ENCODE measurements at regions of chr4 and their contacts with region 1.

Region 1: DNA sequence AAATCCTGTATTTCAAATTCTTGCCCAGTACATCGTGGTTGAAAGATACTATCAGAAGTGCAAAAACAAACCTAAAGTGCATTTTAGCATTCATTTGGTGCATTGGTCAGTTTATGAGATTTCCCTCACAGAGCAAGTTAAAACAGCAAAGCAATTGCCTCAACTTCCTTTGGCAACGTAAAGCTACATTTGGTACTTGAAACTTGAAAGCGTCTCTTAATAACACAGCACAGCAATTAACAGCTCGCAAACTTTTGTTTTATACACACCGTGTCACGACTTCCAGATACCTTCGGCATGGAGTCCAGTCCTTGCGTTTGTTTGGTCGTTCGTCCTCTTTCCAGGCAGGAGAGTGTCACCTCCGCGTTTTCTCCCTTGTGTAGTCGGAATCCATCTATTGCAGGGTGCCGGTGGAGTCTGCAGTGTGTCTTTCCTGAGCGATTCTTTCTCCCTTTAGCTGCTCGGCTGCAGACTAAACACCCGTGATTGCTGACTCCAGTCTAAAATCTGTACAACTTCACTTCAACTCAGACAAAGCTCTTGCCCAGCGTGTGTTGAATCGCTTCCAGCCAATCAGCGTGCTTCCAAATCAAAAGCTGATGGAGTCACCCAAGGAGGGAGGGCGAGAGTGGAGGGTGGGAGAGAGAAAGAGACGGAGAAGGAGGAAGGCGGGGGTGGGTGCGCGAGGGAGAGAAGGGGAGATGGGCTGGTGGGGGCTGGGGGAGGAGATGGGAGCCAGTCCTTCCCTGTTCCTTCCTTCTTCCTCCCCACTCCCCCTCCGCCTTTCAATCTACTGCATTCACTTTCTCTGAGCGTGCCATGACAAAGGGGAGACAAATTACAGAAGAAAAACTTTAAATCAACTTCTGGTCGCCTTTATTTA is at the start of gene PCDH18:
- DNase-seq: peak; percentile 98
- ATAC-seq: peak; percentile 83
- H3K4me3 ChIP-seq: peak within 1 kb of the TSS; percentile 62
- H3K27ac ChIP-seq: peak within 1 kb of the TSS; percentile 87
- H3K4me1 ChIP-seq: no peaks in the 10 kb centered on the region; the same call in 1 of the 2 replicates
- H3K27me3 ChIP-seq: no peaks in the 10 kb centered on the region
- CTCF ChIP-seq: no peak
- POLR2A ChIP-seq: peak; percentile 79
- RAD21 ChIP-seq: no peak; the same call in 1 of the 2 replicates
- total RNA-seq, gene PCDH18: 108 and 119 TPM in 2 replicates

Region 2: GRCh38 chr4:137226898-137227297 is 305.3 kb before region 1 on chr4:
- CTCF ChIA-PET with region 1: no interaction called
- POLR2A ChIA-PET with region 1: no interaction called
- dilution Hi-C with region 1: no loop called
- in situ Hi-C with region 1: no loop called
- intact Hi-C with region 1: loop called (anchors 5 kb)
- DNase-seq: peak; percentile 16
- ATAC-seq: peak; percentile 44; the same call in 1 of the 2 replicates
- H3K4me3 ChIP-seq: no peak overlapping the region
- H3K27ac ChIP-seq: no peak overlapping the region
- H3K4me1 ChIP-seq: no peaks in the 10 kb centered on the region
- H3K27me3 ChIP-seq: no peaks in the 10 kb centered on the region
- CTCF ChIP-seq: peak; percentile 28
- POLR2A ChIP-seq: no peak
- RAD21 ChIP-seq: peak; percentile 41; the same call in 1 of the 2 replicates

Region 3: DNA sequence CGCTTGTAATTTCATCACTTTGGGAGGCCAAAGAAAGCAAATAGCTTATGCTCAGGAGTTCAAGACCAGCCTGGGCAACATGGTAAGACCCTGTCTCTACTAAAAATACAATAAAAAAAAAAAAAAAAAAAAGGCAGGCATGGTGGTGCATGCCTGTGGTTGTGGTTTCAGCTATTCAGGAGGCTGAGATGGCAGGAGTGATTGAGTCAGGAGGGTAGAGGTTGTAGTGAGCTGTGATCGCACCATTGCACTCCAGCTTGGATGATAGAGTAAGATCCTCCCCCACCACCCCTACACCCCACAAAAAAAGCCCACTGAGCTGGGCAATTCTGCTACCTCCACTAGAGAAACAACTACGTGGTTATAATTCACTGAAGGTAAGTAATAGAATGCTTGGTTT is 118.9 kb after region 1 on chr4:
- CTCF ChIA-PET with region 1: interaction called, 5 read pairs
- POLR2A ChIA-PET with region 1: interaction called, 19 read pairs
- dilution Hi-C with region 1: no loop called
- in situ Hi-C with region 1: loop called (anchors 10 kb)
- intact Hi-C with region 1: no loop called
- DNase-seq: peak; percentile 72
- ATAC-seq: peak; percentile 62; the same call in 1 of the 2 replicates
- H3K4me3 ChIP-seq: no peak overlapping the region
- H3K27ac ChIP-seq: peak overlapping the region; percentile 76
- H3K4me1 ChIP-seq: peaks cover 5% of the 10 kb centered on the region; the same call in 1 of the 2 replicates
- H3K27me3 ChIP-seq: no peaks in the 10 kb centered on the region
- CTCF ChIP-seq: no peak
- POLR2A ChIP-seq: no peak
- RAD21 ChIP-seq: no peak

Region 4: DNA sequence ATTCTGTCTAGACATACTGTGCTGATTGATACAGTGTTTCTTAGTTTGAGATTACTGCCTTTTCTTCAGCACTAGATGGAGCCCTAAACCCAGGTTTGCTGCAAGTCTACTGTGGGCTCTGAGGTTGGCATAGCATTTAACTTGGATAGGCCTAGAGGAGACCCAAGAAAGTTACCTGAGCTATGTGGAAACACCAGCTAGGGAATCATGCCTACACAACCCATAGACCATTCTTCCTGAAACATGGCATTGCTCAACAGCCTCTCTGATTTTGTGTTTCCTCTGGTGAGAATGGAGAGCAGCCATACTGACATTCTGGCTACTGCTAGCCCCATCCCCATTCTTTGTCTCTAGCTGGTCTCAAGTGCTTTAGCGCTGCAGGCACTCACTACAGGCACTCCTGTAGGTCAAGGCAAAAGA is 287.7 kb after region 1 on chr4:
- CTCF ChIA-PET with region 1: no interaction called
- POLR2A ChIA-PET with region 1: no interaction called
- dilution Hi-C with region 1: no loop called
- in situ Hi-C with region 1: no loop called
- intact Hi-C with region 1: loop called (anchors 5 kb)
- DNase-seq: peak; percentile 65
- ATAC-seq: peak; percentile 91
- H3K4me3 ChIP-seq: no peak overlapping the region
- H3K27ac ChIP-seq: no peak overlapping the region
- H3K4me1 ChIP-seq: no peaks in the 10 kb centered on the region
- H3K27me3 ChIP-seq: no peaks in the 10 kb centered on the region
- CTCF ChIP-seq: peak; percentile 74
- POLR2A ChIP-seq: no peak
- RAD21 ChIP-seq: peak; percentile 88

Region 5: DNA sequence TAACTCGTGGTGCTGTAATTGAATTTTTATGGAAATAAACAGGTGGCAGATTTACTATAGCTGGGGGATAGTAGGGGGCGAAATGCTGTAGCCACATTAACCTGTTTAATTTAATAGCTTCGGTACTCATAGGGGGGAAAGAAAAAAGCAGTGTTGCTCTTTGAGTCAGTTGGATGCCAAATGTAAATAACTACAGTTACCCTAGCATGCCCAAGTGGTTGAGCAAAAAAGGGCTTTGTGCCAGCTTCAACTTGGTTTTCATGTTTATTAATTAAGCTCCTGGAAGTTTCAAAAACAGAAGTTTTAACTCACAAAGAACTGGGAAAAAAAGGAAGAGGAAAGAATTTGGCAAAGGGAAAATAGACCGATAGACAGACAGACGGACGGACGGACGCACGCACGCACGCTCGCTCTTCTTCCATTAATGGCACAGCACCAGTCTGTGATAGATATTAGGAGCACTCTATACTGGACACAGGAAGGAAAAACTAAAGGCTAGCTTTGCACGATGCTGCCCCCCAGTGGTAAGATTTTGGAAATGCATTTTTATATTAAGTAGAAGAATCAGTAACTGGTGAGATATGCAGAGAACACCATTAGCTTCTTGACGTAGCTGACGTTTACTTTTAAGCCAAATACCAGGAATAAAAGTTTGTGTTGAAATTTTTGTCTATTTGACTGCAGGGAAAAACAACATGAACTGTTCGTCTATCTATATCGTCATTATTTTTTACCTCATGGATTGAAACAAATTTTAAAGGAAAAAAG is 558.1 kb after region 1 on chr4:
- CTCF ChIA-PET with region 1: interaction called, 6 read pairs
- POLR2A ChIA-PET with region 1: no interaction called
- dilution Hi-C with region 1: no loop called
- in situ Hi-C with region 1: no loop called
- intact Hi-C with region 1: loop called (anchors 2 kb)
- DNase-seq: peak; percentile 83
- ATAC-seq: peak; percentile 96
- H3K4me3 ChIP-seq: peak overlapping the region; percentile 34
- H3K27ac ChIP-seq: peak overlapping the region; percentile 57
- H3K4me1 ChIP-seq: 0 out of 2 replicates have a peak, but pooled peaks cover 2% of the 10 kb centered on the region
- H3K27me3 ChIP-seq: no peaks in the 10 kb centered on the region
- CTCF ChIP-seq: peak; percentile 87
- POLR2A ChIP-seq: no peak
- RAD21 ChIP-seq: peak; percentile 93

Region 6: DNA sequence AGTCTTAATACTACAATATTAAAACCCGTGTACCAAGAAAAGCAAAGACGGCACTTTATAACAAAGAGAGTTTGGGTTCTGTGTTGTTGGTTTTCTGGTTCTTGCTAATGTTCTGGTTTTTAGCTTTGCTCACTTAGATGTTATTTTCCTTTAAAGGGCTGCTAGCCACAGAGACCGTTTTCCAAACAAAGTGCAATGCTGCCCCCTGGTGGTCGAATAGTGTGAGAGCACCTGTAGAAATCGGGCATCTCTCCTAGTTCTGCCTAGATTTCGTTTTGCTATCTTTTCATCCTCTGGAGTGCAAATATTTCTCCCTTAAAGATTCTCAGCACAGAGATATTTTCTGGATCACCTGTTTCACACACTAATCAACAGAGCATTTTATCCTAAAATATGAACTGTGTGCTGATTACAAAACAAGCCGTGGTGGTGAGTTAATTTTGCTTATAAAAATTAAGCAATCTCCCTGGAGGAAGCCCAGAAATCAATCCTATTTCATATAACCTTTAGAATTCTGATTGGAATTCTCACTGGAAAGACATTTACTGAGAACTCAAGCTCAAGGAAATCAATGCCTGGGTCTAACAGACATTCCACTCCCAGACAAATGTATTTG is 1148.9 kb after region 1 on chr4:
- CTCF ChIA-PET with region 1: no interaction called
- POLR2A ChIA-PET with region 1: no interaction called
- dilution Hi-C with region 1: no loop called
- in situ Hi-C with region 1: loop called (anchors 25 kb)
- intact Hi-C with region 1: loop called (anchors 5 kb)
- DNase-seq: peak; percentile 79
- ATAC-seq: peak; percentile 87
- H3K4me3 ChIP-seq: no peak overlapping the region
- H3K27ac ChIP-seq: no peak overlapping the region
- H3K4me1 ChIP-seq: peaks cover 3% of the 10 kb centered on the region; the same call in 1 of the 2 replicates
- H3K27me3 ChIP-seq: no peaks in the 10 kb centered on the region
- CTCF ChIP-seq: peak; percentile 91
- POLR2A ChIP-seq: peak; percentile 36; the same call in 1 of the 2 replicates
- RAD21 ChIP-seq: peak; percentile 97